ENCODE measurements at regions of chr15 and their contacts with region 1.

Region 1: DNA sequence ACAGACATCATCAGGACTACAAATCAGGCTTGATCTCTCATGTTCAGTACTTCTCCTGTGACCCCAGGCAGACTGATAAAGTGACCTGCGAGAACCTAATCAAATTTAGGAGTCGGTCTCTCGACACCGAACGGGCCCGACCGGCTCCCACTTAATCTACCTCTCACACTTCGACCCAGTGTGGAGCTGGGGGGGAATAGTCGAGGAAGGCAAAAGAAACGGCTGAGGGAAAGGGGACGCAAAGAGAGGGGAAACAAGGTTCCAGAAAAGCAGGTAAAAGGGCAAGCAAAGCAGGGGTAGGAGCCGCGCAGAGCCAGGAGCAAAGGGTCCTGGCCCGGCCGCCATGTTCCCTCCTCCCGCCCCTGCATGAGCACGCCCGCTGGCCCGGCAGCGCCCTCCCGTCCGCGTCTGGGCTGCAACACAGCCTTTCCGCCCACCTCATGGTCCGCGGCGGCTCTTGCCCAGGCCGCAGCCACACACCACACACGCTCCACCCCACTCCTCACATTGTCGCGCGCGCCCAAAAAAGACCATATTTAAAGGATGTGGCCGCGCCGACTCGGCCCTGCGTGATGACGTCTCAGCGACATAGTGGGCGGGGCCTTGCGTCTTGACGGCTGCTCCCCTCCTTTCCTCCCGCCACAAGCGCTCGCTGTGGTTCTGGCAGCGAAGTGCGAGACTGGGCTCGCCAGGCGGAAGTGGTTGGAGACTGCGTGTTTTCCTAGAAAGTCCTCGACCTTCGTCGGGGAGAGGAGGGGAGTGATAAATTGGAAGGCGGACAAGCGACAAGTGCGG is at the start of gene ICE2:
- DNase-seq: peak; percentile 97 to 98
- ATAC-seq: peak; percentile 94 to 96 (median 95)
- H3K4me3 ChIP-seq: peak within 1 kb of the TSS; percentile 89
- H3K27ac ChIP-seq: peak within 1 kb of the TSS; percentile 94
- H3K4me1 ChIP-seq: peaks cover 31% of the 10 kb centered on the region
- H3K27me3 ChIP-seq: no peaks in the 10 kb centered on the region
- CTCF ChIP-seq: no peak
- total RNA-seq, gene ICE2: 20.0 to 25.9 (median 22.7) TPM

Region 2: GRCh38 chr15:60374628-60375081 is 104.1 kb before region 1 on chr15:
- intact Hi-C with region 1: loop called in 1 of 2 experiments (anchors 5 kb)
- DNase-seq: peak; percentile 64 to 82
- ATAC-seq: peak; percentile 79 to 86 (median 84)
- H3K4me3 ChIP-seq: peak overlapping the region; percentile 26
- H3K27ac ChIP-seq: peak overlapping the region; percentile 79
- H3K4me1 ChIP-seq: peaks cover 96% of the 10 kb centered on the region
- H3K27me3 ChIP-seq: no peaks in the 10 kb centered on the region
- CTCF ChIP-seq: no peak

Region 3: DNA sequence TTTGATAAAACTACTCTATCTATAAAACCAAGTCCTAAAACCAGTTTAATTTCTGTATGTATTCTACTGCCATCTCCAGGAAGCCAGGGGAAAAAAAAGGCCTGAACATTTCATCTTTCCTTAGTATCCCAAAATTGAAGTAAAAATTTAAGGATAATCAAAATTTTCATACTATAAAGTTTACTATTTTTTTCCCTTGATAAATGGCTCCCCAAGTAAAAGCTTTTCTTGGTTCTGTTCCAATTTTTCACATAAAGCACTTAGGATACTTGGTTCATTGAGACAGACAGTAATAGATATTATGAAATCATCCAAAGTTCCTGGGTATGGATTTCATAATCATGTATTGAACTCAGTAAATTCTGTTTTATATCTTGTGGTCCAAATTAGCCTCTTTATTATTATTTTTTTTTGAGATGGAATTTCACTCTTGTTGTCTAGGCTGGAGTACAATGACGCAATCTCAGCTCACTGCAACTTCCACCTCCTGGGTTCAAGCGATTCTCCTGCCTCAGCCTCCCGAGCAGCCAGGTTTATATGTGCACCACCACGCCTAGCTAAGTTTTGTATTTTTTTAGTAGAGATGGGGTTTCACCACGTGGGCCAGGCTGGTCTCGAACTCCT is 34.4 kb before region 1 on chr15:
- intact Hi-C with region 1: no loop called
- DNase-seq: no peak
- ATAC-seq: peak in 2 of 4 donors; percentile 52 to 79
- H3K4me3 ChIP-seq: no peak overlapping the region
- H3K27ac ChIP-seq: no peak overlapping the region
- H3K4me1 ChIP-seq: no peaks in the 10 kb centered on the region
- H3K27me3 ChIP-seq: no peaks in the 10 kb centered on the region
- CTCF ChIP-seq: peak; percentile 65